ENCODE measurements at regions of chr14 and their contacts with region 1.

Region 1: DNA sequence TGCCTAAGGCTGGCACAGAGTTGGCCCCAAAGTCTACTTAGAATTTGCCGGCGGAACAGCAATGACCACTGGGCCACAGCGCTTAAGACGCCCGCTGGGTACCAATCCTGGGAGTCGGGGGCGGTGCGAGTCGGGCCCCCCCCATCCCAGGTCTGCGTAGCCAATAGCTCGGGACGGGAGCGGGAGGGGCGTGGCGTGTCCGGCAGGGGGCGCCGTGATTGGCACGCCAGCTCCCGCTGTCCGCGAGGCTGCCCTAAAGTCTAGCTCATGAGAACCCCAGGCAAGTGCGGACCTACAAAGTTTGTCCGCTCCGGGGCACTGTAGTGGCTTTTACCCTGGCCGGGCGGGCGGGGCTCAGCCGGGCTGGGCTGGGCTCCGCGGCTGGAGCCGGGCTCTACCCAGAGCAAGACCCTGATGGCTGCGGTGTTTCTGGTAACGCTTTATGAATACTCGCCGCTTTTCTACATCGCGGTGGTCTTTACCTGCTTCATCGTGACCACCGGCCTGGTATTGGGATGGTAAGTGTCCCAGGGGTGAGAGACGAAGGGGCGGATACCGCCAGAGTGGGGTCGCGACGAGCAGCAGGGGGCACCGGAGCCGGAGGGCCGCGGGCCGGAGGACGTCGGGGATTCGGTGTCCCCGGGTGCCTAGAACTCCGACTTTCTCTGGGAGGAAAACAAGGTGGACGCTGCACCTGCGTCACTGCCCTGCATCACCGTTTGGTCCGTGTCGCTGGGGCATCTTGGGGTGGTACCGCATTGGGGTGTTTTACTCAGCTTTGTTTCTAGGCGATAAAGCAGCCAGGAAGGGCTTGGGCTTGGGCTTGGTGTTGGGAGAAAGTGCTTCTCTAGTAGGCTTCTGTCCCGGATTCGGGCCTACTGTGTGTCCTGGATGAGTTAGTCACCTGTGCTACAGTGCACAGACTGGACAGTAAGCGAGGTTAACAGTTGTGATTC is at the start of gene CGRRF1:
- DNase-seq: peak; percentile 99
- H3K4me3 Mint-ChIP-seq: peak within 1 kb of the TSS; percentile 96
- H3K27ac Mint-ChIP-seq: peak within 1 kb of the TSS; percentile 88
- H3K4me1 Mint-ChIP-seq: peaks cover 29% of the 10 kb centered on the region
- H3K27me3 Mint-ChIP-seq: peaks cover 8% of the 10 kb centered on the region
- total RNA-seq, gene CGRRF1: 7.8 and 11.9 TPM in 2 replicates

Region 2: GRCh38 chr14:54435500-54435981 is 74.3 kb before region 1 on chr14:
- intact Hi-C with region 1: loop called (anchors 1 kb)
- DNase-seq: no peak
- H3K4me3 Mint-ChIP-seq: peak overlapping the region; percentile 74
- H3K27ac Mint-ChIP-seq: peak overlapping the region; percentile 89
- H3K4me1 Mint-ChIP-seq: peaks cover 62% of the 10 kb centered on the region
- H3K27me3 Mint-ChIP-seq: no peaks in the 10 kb centered on the region

Region 3: DNA sequence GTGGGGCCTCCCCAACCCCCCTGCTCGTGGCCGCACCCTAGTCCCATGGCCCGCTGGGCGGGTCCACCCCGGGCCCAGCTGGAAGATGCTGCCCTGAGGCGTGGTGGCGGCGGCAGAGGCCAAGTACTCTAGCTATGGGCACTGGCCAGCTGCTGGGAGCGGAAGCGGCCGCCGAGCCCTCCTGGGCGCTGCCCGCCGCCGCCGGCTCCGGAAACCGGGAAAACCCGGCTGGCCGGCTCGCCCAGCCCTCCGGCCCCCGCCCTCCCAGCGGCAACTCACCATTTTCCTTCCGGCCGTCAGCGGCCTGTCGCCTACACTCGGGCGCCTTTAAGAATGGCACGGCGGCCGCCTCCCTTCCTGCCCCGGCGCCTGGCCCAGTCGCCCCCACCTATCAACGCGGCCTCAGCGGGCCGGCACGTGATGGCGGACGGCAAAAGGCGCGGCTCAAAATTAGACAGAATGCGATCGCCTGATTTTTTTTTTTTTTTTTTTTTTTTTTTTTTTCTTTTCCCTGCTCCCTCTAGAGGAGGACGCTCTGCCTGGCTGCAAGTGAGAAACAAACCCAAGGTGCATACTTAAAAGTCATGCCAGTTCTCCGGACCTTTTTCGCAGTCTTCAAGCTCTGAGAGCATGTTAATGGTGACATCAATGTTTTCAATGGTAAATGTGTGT is 21.0 kb before region 1 on chr14 and contains the start of gene GMFB:
- intact Hi-C with region 1: loop called (anchors 1 kb)
- DNase-seq: peak; percentile 96
- H3K4me3 Mint-ChIP-seq: peak within 1 kb of the TSS; percentile 89
- H3K27ac Mint-ChIP-seq: peak within 1 kb of the TSS; percentile 86
- H3K4me1 Mint-ChIP-seq: peaks cover 47% of the 10 kb centered on the region
- H3K27me3 Mint-ChIP-seq: peaks cover 3% of the 10 kb centered on the region
- total RNA-seq, gene GMFB: 40.9 and 41.1 TPM in 2 replicates

Region 4: DNA sequence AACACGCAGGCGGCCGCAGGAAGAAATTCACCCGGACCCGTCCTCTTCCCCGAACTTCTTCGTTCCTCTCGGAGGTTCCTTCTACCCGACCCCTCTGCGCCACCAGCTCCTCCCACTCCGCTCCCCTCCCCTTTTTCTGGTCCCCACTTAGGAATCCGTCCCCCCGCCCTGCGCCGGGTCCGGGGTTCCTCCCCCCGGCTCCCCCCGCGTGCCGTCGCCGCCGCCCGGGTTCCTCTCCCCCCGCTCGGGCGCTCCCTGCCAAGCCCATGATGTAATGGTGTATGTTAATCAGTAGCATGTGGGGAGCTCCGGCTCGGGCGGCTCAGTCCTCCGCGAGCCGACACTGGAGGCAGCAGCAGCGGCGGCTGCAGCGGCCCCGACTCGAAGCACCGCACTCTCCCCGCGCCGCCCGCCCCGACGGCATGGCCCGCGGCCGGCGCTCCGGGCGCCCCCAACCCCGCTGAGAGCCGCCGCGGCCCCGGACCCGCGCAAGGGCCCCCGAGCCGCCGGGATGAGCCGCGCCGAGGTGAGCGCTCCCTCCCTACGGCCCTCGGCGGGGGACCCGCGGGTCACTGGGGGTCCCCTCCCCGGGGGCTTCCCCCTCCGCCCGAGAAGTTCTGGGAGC is 56.1 kb after region 1 on chr14:
- intact Hi-C with region 1: no loop called
- DNase-seq: peak; percentile 92
- H3K4me3 Mint-ChIP-seq: peak overlapping the region; percentile 81
- H3K27ac Mint-ChIP-seq: no peak overlapping the region
- H3K4me1 Mint-ChIP-seq: peaks cover 21% of the 10 kb centered on the region
- H3K27me3 Mint-ChIP-seq: peaks cover 42% of the 10 kb centered on the region